Activated T-helper 2 cell treated with anti-CD3 and anti-CD28 coated beads, Interferon-gamma antibody, Interleukin-2, Interleukin-4, amounts not matched to agents 10 μg/mL and 5 μg/mL and 100 μg/mL, durations not matched to agents 14 hours and 24 hours and 36 hours (primary cell): ENCODE measurements at regions of chr11 and their contacts with region 1.

Region 1: GRCh38 chr11:102599642-102600261 is 25.4 kb downstream of the MMP20 start:
- DNase-seq: no peak
- H3K4me3 Mint-ChIP-seq: no peak overlapping the region
- H3K27ac Mint-ChIP-seq: peak overlapping the region; percentile 37
- H3K4me1 Mint-ChIP-seq: peaks cover 36% of the 10 kb centered on the region
- H3K27me3 Mint-ChIP-seq: no peaks in the 10 kb centered on the region

Region 2: GRCh38 chr11:102317099-102317767 is 282.5 kb before region 1 on chr11 and contains the start of gene BIRC3:
- intact Hi-C with region 1: loop called (anchors 5 kb)
- DNase-seq: peak; percentile 91
- H3K4me3 Mint-ChIP-seq: peak within 1 kb of the TSS; percentile 98
- H3K27ac Mint-ChIP-seq: peak within 1 kb of the TSS; percentile 99
- H3K4me1 Mint-ChIP-seq: peaks cover 58% of the 10 kb centered on the region
- H3K27me3 Mint-ChIP-seq: no peaks in the 10 kb centered on the region
- total RNA-seq, gene BIRC3: 217 and 221 TPM in 2 replicates

Region 3: GRCh38 chr11:102546923-102547471 is 52.8 kb before region 1 on chr11:
- intact Hi-C with region 1: loop called (anchors 5 kb)
- DNase-seq: no peak
- H3K4me3 Mint-ChIP-seq: no peak overlapping the region
- H3K27ac Mint-ChIP-seq: no peak overlapping the region
- H3K4me1 Mint-ChIP-seq: peaks cover 11% of the 10 kb centered on the region
- H3K27me3 Mint-ChIP-seq: peaks cover 2% of the 10 kb centered on the region

Region 4: GRCh38 chr11:102560555-102561011 is 39.2 kb before region 1 on chr11:
- intact Hi-C with region 1: loop called (anchors 1 kb)
- DNase-seq: no peak
- H3K4me3 Mint-ChIP-seq: peak overlapping the region; percentile 54
- H3K27ac Mint-ChIP-seq: peak overlapping the region; percentile 75
- H3K4me1 Mint-ChIP-seq: peaks cover 45% of the 10 kb centered on the region
- H3K27me3 Mint-ChIP-seq: peaks cover 3% of the 10 kb centered on the region

Region 5: DNA sequence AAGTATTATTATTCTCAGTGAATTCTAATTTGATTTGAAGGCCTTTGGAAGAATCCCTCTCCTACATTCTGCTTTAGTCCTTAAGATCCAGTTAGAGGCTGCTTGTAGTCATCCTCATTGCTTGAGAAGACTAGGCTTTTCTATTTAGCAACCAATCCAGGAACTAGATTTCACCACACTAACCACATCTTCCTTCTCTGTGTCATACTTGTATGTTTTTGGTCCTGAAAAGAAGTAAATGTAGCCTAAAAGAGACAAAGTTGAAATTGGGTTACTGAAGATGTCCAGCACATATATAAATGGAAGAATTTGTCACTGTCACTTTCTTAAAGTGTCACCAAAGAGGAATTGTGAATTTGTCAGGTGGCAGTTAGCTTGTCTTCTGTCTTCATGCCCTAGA is 22.6 kb before region 1 on chr11:
- intact Hi-C with region 1: loop called (anchors 1 kb)
- DNase-seq: no peak
- H3K4me3 Mint-ChIP-seq: no peak overlapping the region
- H3K27ac Mint-ChIP-seq: no peak overlapping the region
- H3K4me1 Mint-ChIP-seq: peaks cover 36% of the 10 kb centered on the region
- H3K27me3 Mint-ChIP-seq: no peaks in the 10 kb centered on the region

Region 6: GRCh38 chr11:102589047-102589459 is 10.7 kb before region 1 on chr11:
- intact Hi-C with region 1: loop called (anchors 1 kb)
- DNase-seq: no peak
- H3K4me3 Mint-ChIP-seq: no peak overlapping the region
- H3K27ac Mint-ChIP-seq: peak overlapping the region; percentile 31
- H3K4me1 Mint-ChIP-seq: peaks cover 32% of the 10 kb centered on the region
- H3K27me3 Mint-ChIP-seq: no peaks in the 10 kb centered on the region

Region 7: DNA sequence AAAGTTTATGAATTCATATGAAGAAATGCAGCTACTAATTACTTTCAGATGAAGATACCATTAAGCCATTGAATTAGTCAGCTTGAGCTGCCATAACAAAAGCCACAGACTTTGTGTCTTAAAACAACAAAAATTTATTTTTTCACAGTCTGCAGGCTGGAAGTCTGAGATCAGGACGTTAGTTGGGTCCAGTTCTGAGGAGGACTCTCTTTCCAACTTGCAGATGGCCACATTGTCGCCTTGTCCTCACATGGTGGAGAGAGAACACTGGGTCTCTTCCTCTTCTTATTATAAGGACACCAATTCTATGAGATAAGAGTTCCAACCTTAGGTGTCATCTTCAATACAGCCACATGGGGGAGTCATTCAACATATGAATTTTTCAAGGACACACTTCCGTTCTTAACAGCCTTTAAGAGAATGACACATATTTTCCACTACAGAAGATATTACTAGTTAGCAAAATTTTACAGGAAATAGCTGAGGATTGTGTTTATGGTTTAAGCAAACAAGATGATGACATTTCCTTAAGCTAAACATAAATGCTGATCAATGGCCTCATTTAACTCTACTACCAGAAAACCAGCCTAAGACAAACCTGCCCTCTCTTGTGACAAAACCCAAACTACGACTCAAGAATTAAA is 436.2 kb after region 1 on chr11:
- intact Hi-C with region 1: loop called (anchors 10 kb)
- DNase-seq: peak; percentile 41
- H3K4me3 Mint-ChIP-seq: no peak overlapping the region
- H3K27ac Mint-ChIP-seq: peak overlapping the region; percentile 85
- H3K4me1 Mint-ChIP-seq: peaks cover 21% of the 10 kb centered on the region
- H3K27me3 Mint-ChIP-seq: peaks cover 3% of the 10 kb centered on the region